OCI-LY7 (cell line): ENCODE measurements at regions of chr6 and their contacts with region 1.

Region 1: DNA sequence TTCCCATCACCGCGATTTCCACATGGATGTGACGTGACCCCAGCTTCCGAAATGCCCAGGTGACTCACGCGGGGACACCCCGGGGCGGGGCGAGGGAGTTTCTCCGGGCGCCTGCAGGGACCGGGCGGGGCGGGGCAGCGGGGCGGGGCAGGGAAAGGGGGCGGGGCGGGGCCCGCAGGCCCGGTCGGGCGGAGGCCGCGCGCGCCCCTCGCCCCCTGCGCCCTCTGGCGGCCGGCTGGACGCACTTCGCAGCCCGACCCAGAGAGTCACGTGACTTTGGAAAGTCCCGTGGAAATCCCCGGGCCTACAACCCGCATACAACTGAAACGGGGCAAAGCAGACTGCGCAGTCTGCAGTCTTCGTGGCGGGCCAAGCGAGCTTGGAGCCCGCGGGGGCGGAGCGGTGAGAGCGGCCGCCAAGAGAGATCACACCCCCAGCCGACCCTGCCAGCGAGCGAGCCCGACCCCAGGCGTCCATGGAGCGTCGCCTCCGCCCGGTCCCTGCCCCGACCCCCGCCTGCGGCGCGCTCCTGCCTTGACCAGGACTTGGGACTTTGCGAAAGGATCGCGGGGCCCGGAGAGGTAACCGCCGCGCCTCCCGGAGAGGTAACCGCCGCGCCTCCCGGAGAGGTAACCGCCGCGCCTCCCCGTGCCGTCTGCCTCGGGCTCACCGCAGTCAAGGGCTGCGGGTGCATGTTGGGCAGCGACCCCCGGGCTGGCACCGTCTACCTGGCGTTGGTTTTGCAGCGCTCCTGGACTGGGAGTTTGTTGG is at the start of gene TNFAIP3:
- DNase-seq: peak; percentile 96
- H3K4me3 ChIP-seq: peak within 1 kb of the TSS; percentile 85
- H3K27ac ChIP-seq: peak within 1 kb of the TSS; percentile 79
- H3K4me1 ChIP-seq: peaks cover 45% of the 10 kb centered on the region
- CTCF ChIP-seq: peak; percentile 64
- total RNA-seq, gene TNFAIP3: 7.0 and 8.8 TPM in 2 replicates

Region 2: DNA sequence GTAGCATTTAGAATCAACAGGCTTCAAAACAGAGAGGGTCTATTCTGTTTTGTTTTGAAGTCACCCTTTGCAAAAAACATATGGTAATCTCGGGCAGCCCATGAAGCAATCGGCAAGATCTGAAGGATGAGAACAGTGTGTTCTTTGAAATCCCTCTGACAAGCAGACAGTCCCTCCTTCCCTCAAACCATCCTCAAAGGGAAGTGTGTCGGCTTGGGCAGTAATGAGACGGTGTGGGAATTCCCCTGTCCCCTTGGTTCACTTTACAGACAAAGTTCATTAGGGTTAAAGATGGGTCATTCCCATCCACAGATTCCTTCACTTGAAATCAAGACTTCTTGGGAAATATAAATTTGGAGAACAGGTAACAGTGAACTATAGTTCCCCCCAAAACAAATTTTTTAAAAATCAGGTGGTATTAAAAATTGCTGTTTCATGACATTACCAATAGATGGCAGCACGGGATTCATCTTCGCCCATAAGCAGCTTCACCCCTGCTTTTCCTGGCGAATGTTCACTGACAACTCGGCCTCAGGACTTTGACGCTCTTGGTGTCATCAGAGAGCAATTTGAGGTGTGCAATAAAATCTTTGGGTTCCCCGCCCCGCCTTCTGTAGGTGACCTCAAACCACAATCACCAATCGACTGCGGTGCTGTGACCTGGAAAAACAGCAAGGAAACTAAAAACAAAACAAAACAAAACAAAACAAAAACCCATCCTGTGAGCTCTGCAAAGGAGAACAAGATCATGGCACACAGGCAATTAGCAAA is 159.3 kb before region 1 on chr6:
- CTCF ChIA-PET with region 1: interaction called, 4 read pairs
- POLR2A ChIA-PET with region 1: interaction called, 6 read pairs
- intact Hi-C with region 1: loop called (anchors 1 kb)
- DNase-seq: peak; percentile 87
- H3K4me3 ChIP-seq: no peak overlapping the region
- H3K27ac ChIP-seq: no peak overlapping the region
- H3K4me1 ChIP-seq: peaks cover 35% of the 10 kb centered on the region
- CTCF ChIP-seq: peak; percentile 91

Region 3: GRCh38 chr6:137799950-137800568 is 67.0 kb before region 1 on chr6:
- CTCF ChIA-PET with region 1: interaction called, 3 read pairs
- POLR2A ChIA-PET with region 1: interaction called, 3 read pairs
- intact Hi-C with region 1: loop called (anchors 2 kb)
- DNase-seq: peak; percentile 66
- H3K4me3 ChIP-seq: no peak overlapping the region
- H3K27ac ChIP-seq: no peak overlapping the region
- H3K4me1 ChIP-seq: no peaks in the 10 kb centered on the region
- CTCF ChIP-seq: peak; percentile 84

Region 4: GRCh38 chr6:137882225-137882961 is 15.3 kb after region 1 on chr6:
- CTCF ChIA-PET with region 1: no interaction called
- POLR2A ChIA-PET with region 1: interaction called, 11 read pairs
- intact Hi-C with region 1: no loop called
- DNase-seq: no peak
- H3K4me3 ChIP-seq: no peak overlapping the region
- H3K27ac ChIP-seq: no peak overlapping the region
- H3K4me1 ChIP-seq: peaks cover 6% of the 10 kb centered on the region
- CTCF ChIP-seq: no peak

Region 5: GRCh38 chr6:137951064-137951597 is 84.0 kb after region 1 on chr6:
- CTCF ChIA-PET with region 1: interaction called, 5 read pairs
- POLR2A ChIA-PET with region 1: interaction called, 4 read pairs
- intact Hi-C with region 1: loop called (anchors 1 kb)
- DNase-seq: peak; percentile 89
- H3K4me3 ChIP-seq: peak overlapping the region; percentile 53
- H3K27ac ChIP-seq: peak overlapping the region; percentile 86
- H3K4me1 ChIP-seq: peaks cover 49% of the 10 kb centered on the region
- CTCF ChIP-seq: peak; percentile 69

Region 6: DNA sequence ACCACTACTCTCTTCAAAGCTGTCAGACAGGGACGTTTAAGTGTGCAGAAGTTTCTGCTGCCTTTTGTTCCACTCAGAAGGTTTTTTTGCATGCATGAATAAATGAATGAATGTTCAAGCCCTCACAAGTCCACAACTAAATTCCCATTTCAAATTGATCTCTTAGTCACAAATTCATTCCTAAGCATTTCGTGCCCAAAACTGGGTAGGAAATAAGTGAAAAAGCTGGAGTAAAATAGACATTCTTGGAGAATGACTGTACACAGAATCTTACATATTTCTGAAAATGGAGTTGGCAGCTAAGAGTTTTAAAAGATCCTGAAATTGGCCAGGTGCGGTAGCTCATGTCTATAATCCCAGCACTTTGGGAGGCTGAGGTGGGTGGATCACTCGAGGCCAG is 122.6 kb after region 1 on chr6:
- CTCF ChIA-PET with region 1: no interaction called
- POLR2A ChIA-PET with region 1: no interaction called
- intact Hi-C with region 1: no loop called
- DNase-seq: no peak
- H3K4me3 ChIP-seq: no peak overlapping the region
- H3K27ac ChIP-seq: no peak overlapping the region
- H3K4me1 ChIP-seq: no peaks in the 10 kb centered on the region
- CTCF ChIP-seq: no peak

Region 7: GRCh38 chr6:138001750-138002349 is 134.8 kb after region 1 on chr6:
- CTCF ChIA-PET with region 1: interaction called, 3 read pairs
- POLR2A ChIA-PET with region 1: interaction called, 4 read pairs
- intact Hi-C with region 1: loop called (anchors 1 kb)
- DNase-seq: peak; percentile 57
- H3K4me3 ChIP-seq: no peak overlapping the region
- H3K27ac ChIP-seq: no peak overlapping the region
- H3K4me1 ChIP-seq: no peaks in the 10 kb centered on the region
- CTCF ChIP-seq: peak; percentile 99